HCT116 (cell line): ENCODE measurements at regions of chr1 and their contacts with region 1.

Region 1: GRCh38 chr1:199551967-199552565 is 475.4 kb upstream of the NR5A2 start:
- DNase-seq: peak; percentile 40
- ATAC-seq: peak; percentile 67
- H3K4me3 ChIP-seq: no peak overlapping the region
- H3K27ac ChIP-seq: no peak overlapping the region
- H3K4me1 ChIP-seq: no peaks in the 10 kb centered on the region
- H3K27me3 ChIP-seq: no peaks in the 10 kb centered on the region
- CTCF ChIP-seq: peak; percentile 66 to 87 (median 75); a peak in 5 of 6 replicates
- POLR2A ChIP-seq: no peak
- RAD21 ChIP-seq: peak; percentile 79

Region 2: GRCh38 chr1:200184196-200184595 is 632.1 kb after region 1 on chr1:
- CTCF ChIA-PET with region 1: no interaction called
- POLR2A ChIA-PET with region 1: no interaction called
- RAD21 ChIA-PET with region 1: no interaction called
- intact Hi-C with region 1: loop called (anchors 5 kb)
- DNase-seq: peak; percentile 42
- ATAC-seq: peak; percentile 56
- H3K4me3 ChIP-seq: no peak overlapping the region
- H3K27ac ChIP-seq: no peak overlapping the region
- H3K4me1 ChIP-seq: peaks cover 22 to 51% of the 10 kb centered on the region in 2 experiments
- H3K27me3 ChIP-seq: no peaks in the 10 kb centered on the region
- CTCF ChIP-seq: no peak
- POLR2A ChIP-seq: no peak
- RAD21 ChIP-seq: peak; percentile 20; the same call in 1 of the 2 replicates